ENCODE measurements at regions of chr10 and their contacts with region 1.

Region 1: DNA sequence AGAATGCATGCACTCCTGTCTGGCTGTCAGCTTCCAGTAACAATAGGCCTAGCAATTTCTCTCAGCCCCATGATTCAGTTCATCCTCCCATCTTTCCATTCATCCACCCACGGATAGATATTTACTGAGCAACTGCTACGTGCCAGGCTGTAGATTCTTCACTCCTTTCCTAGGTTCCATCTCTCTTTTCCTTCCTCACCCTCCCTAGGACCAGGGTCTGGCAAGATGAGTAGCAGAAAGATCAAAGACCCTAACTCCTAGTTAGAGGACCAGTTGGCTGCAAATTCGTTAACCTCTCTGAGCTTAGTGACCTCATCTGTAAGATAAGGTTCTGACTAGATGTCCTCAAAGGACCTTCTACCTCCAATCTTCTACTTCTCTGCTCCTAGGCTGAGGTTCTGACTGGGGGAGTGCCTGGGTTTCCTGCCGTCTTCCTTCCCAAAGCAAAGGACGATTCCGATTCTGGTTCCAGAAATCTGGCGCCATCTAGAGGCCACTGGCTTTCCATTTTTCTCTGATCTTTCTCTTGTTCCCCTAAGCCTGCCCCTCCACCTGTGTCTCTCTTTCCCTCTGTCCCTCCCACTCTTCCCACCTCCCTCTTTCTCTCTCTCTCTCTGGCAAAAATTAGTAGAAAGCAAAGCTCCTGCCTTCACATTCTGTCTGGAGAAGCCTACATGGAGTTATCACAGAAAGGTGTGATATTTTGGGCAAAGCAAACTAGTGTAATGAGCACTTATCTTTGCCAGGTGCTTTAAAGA is 26.2 kb downstream of the TBATA start:
- DNase-seq: no peak

Region 2: GRCh38 chr10:70549962-70550458 is 208.9 kb before region 1 on chr10:
- intact Hi-C with region 1: loop called (anchors 2 kb)
- DNase-seq: no peak

Region 3: GRCh38 chr10:70619271-70620019 is 139.5 kb before region 1 on chr10:
- intact Hi-C with region 1: loop called (anchors 2 kb)
- DNase-seq: no peak

Region 4: GRCh38 chr10:70880077-70880534 is 121.2 kb after region 1 on chr10:
- intact Hi-C with region 1: no loop called
- DNase-seq: no peak

Measured in cardiac septum (tissue), 1 donor.